H1 (cell line): ENCODE measurements at regions of chr16 and their contacts with region 1.

Region 1: DNA sequence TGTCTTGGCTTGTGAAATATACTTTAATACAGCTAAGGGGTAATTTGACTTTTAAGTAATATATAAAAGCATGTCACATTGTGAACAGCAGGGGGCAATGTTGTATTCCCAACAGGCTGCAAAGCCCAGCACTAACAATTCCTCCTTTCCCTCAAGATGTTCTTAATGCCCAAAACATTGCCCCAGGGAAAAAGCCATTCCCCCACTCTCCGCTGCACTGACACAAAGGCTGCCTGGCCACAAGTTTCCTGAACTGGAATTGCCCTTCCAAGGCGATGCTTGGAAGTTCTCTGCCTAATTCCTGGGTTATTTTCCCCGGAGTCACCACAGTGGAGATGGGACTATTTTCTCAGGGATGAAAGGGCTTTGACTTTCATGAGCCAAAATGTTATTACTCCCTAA is 27.2 kb downstream of the CLEC16A start:
- DNase-seq: no peak
- H3K4me3 ChIP-seq: no peak overlapping the region
- H3K27ac ChIP-seq: no peak overlapping the region
- H3K4me1 ChIP-seq: peaks cover 0 to 2% (median 0%) of the 10 kb centered on the region in 4 experiments; a peak in 2 of 7 replicates
- H3K27me3 ChIP-seq: no peaks in the 10 kb centered on the region
- CTCF ChIP-seq: peak in 2 of 3 experiments; percentile 63 to 70; a peak in 3 of 4 replicates
- EP300 ChIP-seq: no peak
- POLR2A ChIP-seq: no peak
- RAD21 ChIP-seq: peak; percentile 81 to 84

Region 2: GRCh38 chr16:10497132-10498101 is 474.1 kb before region 1 on chr16:
- CTCF ChIA-PET with region 1: no interaction called
- POLR2A ChIA-PET with region 1: no interaction called
- DNase-seq: no peak
- H3K4me3 ChIP-seq: no peak overlapping the region
- H3K27ac ChIP-seq: no peak overlapping the region
- H3K4me1 ChIP-seq: peaks cover 0 to 7% (median 0%) of the 10 kb centered on the region in 4 experiments; a peak in 1 of 7 replicates
- H3K27me3 ChIP-seq: no peaks in the 10 kb centered on the region
- CTCF ChIP-seq: no peak
- EP300 ChIP-seq: no peak
- POLR2A ChIP-seq: no peak
- RAD21 ChIP-seq: no peak

Region 3: GRCh38 chr16:10859758-10860057 is 111.9 kb before region 1 on chr16:
- CTCF ChIA-PET with region 1: no interaction called
- POLR2A ChIA-PET with region 1: no interaction called
- DNase-seq: no peak
- H3K4me3 ChIP-seq: no peak overlapping the region
- H3K27ac ChIP-seq: no peak overlapping the region
- H3K4me1 ChIP-seq: peaks cover 0 to under 1% (median 0%) of the 10 kb centered on the region in 4 experiments; a peak in 1 of 7 replicates
- H3K27me3 ChIP-seq: no peaks in the 10 kb centered on the region
- CTCF ChIP-seq: no peak
- EP300 ChIP-seq: no peak
- POLR2A ChIP-seq: no peak
- RAD21 ChIP-seq: no peak

Region 4: GRCh38 chr16:10954903-10955302 is 16.7 kb before region 1 on chr16:
- CTCF ChIA-PET with region 1: interaction called, 117 read pairs
- POLR2A ChIA-PET with region 1: no interaction called
- DNase-seq: no peak
- H3K4me3 ChIP-seq: no peak overlapping the region
- H3K27ac ChIP-seq: no peak overlapping the region
- H3K4me1 ChIP-seq: peaks cover 3 to 10% (median 7%) of the 10 kb centered on the region in 4 experiments; a peak in 6 of 7 replicates
- H3K27me3 ChIP-seq: no peaks in the 10 kb centered on the region
- CTCF ChIP-seq: no peak
- EP300 ChIP-seq: no peak
- POLR2A ChIP-seq: no peak
- RAD21 ChIP-seq: no peak

Region 5: GRCh38 chr16:11114366-11115164 is 143.0 kb after region 1 on chr16:
- CTCF ChIA-PET with region 1: no interaction called
- POLR2A ChIA-PET with region 1: no interaction called
- DNase-seq: no peak
- H3K4me3 ChIP-seq: no peak overlapping the region
- H3K27ac ChIP-seq: no peak overlapping the region
- H3K4me1 ChIP-seq: peaks cover 0 to 6% (median 0%) of the 10 kb centered on the region in 4 experiments; a peak in 3 of 7 replicates
- H3K27me3 ChIP-seq: no peaks in the 10 kb centered on the region
- CTCF ChIP-seq: no peak
- EP300 ChIP-seq: no peak
- POLR2A ChIP-seq: no peak
- RAD21 ChIP-seq: no peak